Dorsolateral prefrontal cortex (tissue), 120 donors: ENCODE measurements at regions of chr7 and their contacts with region 1.

Region 1: GRCh38 chr7:121582258-121582657 is 186.2 kb upstream of the FAM3C start:
- DNase-seq: no peak
- H3K4me3 ChIP-seq: no peak overlapping the region
- H3K27ac ChIP-seq: no peak overlapping the region
- H3K27me3 ChIP-seq: peaks cover 0 to 33% (median 0%) of the 10 kb centered on the region in 45 donors
- CTCF ChIP-seq: no peak

Region 2: GRCh38 chr7:121639705-121640104 is 57.4 kb after region 1 on chr7:
- intact Hi-C with region 1: loop called in 1 of 2 experiments (anchors 10 kb)
- DNase-seq: no peak
- H3K4me3 ChIP-seq: no peak overlapping the region
- H3K27ac ChIP-seq: no peak overlapping the region
- H3K27me3 ChIP-seq: peaks cover 0 to 4% (median 0%) of the 10 kb centered on the region in 45 donors
- CTCF ChIP-seq: no peak